AG04449 (cell line): ENCODE measurements at regions of chr6 and their contacts with region 1.

Region 1: DNA sequence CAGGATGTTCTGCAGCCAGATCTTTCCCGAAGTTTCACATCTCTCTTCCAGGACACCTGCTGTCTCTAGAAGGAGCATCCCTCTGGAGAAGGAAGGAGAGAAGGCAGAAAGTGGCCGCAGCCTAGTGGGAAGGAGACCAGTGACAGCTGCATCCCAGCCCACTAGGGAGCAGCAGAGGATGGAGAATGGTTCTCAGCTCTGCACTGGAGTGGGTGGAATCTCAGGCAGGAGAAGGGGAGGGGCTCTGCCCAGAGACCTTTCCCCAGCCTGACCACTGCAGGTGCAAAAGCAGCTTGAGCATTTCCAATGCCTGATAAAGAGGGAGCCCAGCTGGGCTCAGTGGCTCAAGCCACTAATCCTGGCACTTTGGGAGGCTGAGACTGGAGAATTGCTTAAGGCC is 32.3 kb downstream of the NCR2 start:
- DNase-seq: no peak
- H3K4me3 ChIP-seq: no peak overlapping the region
- CTCF ChIP-seq: peak; percentile 87

Region 2: GRCh38 chr6:41132254-41132653 is 235.4 kb before region 1 on chr6:
- CTCF ChIA-PET with region 1: no interaction called
- POLR2A ChIA-PET with region 1: no interaction called
- DNase-seq: no peak
- H3K4me3 ChIP-seq: no peak overlapping the region
- CTCF ChIP-seq: no peak

Region 3: DNA sequence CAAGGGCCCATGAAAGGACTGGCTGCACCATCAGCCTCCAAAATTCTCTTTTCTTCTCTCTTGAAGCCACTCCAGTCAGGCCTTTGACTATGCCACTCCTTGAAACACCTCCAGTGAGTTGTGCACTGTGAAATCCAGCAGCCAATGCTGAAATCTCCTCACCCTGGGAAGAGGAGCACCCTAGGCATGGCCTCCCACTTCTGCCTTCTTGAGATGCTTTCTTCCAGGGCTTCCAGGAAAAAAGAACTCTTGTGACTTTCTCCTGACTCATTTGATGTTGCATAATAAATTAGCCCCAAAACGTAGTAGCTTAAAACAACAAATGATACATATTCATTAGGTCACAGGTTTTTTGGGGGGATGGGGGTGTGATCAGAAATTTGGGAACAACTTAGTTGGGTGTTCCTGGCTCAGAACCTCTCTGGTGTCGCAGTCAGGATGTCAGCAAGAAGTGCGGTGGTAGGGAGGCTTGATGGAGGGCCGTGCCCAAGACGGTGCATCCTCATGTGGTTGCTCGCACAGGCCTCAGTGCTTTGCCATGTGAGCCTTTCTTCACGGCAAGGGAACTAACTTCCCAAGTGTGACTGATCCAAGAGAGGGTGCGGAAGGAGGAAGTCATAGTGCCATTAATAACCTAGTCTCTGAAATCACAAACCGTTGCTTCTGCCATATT is 20.2 kb before region 1 on chr6:
- CTCF ChIA-PET with region 1: interaction called, 24 read pairs
- POLR2A ChIA-PET with region 1: no interaction called
- DNase-seq: no peak
- H3K4me3 ChIP-seq: no peak overlapping the region
- CTCF ChIP-seq: no peak

Region 4: DNA sequence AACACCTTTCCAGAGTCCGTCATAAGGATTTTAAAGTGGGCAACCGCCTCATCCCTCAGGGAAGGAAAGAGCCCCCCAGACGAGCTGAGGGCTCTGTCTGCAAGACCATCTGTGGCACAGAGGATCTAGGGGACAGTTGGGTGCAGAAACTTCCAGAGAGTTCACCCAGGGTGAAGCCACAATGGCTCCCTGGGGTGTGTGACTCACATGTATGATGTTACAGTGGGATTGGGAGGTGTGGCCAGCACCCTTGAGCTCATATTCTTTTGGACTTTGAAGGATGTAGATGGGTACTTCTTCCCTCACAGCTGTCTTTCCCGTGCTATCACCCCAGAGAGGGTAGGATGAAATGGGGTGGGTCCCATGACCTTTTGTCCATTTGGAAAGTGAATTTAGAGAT is 63.2 kb after region 1 on chr6:
- CTCF ChIA-PET with region 1: interaction called, 25 read pairs
- POLR2A ChIA-PET with region 1: no interaction called
- DNase-seq: peak; percentile 33
- H3K4me3 ChIP-seq: no peak overlapping the region
- CTCF ChIP-seq: no peak

Region 5: GRCh38 chr6:41630946-41631345 is 263.2 kb after region 1 on chr6:
- CTCF ChIA-PET with region 1: interaction called, 10 read pairs
- POLR2A ChIA-PET with region 1: no interaction called
- DNase-seq: no peak
- H3K4me3 ChIP-seq: no peak overlapping the region
- CTCF ChIP-seq: no peak

Region 6: GRCh38 chr6:41677124-41677921 is 309.6 kb after region 1 on chr6:
- CTCF ChIA-PET with region 1: interaction called, 137 read pairs
- POLR2A ChIA-PET with region 1: no interaction called
- DNase-seq: no peak
- H3K4me3 ChIP-seq: no peak overlapping the region
- CTCF ChIP-seq: no peak

Region 7: GRCh38 chr6:41735427-41736356 is 368.0 kb after region 1 on chr6 and contains the start of gene TFEB:
- CTCF ChIA-PET with region 1: interaction called, 29 read pairs
- POLR2A ChIA-PET with region 1: no interaction called
- DNase-seq: peak; percentile 41
- H3K4me3 ChIP-seq: peak within 1 kb of the TSS; percentile 73
- CTCF ChIP-seq: peak; percentile 93

Region 8: GRCh38 chr6:41787219-41787917 is 419.7 kb after region 1 on chr6 and contains the start of gene TOMM6:
- CTCF ChIA-PET with region 1: interaction called, 104 read pairs
- POLR2A ChIA-PET with region 1: no interaction called
- DNase-seq: peak; percentile 47
- H3K4me3 ChIP-seq: peak within 1 kb of the TSS; percentile 99
- CTCF ChIP-seq: peak; percentile 94